ENCODE measurements at regions of chr15 and their contacts with region 1.

Region 1: DNA sequence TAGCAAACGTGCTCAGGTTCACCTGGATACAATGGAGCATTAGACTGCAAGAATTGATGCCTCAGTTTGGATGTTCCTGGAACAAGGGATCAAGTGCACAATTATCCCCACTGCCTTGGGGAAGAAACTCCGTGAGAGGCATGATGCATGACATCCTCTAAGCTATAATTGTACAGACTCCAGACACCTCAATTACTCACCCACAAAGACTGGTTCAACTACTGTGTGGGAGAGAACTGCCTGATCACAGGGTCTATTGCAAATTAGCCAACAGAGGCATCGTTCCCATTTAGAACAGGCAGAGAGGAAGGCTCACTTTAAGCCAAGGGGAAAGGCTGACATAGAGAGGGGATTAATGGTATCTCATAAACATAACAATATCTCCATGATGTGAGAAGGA is 43.5 kb downstream of the ARRDC4 start:
- DNase-seq: peak; percentile 86
- H3K4me3 ChIP-seq: no peak overlapping the region
- H3K27ac ChIP-seq: peak overlapping the region; percentile 92
- H3K4me1 ChIP-seq: peaks cover 48% of the 10 kb centered on the region
- H3K27me3 ChIP-seq: no peaks in the 10 kb centered on the region
- CTCF ChIP-seq: no peak

Region 2: GRCh38 chr15:98025235-98025634 is 21.2 kb after region 1 on chr15:
- CTCF ChIA-PET with region 1: no interaction called
- dilution Hi-C with region 1: no loop called
- in situ Hi-C with region 1: no loop called
- intact Hi-C with region 1: loop called (anchors 1 kb)
- DNase-seq: peak; percentile 81
- H3K4me3 ChIP-seq: no peak overlapping the region
- H3K27ac ChIP-seq: peak overlapping the region; percentile 40
- H3K4me1 ChIP-seq: peaks cover 12% of the 10 kb centered on the region
- H3K27me3 ChIP-seq: no peaks in the 10 kb centered on the region
- CTCF ChIP-seq: no peak

Region 3: GRCh38 chr15:98035577-98036010 is 31.6 kb after region 1 on chr15:
- CTCF ChIA-PET with region 1: no interaction called
- dilution Hi-C with region 1: no loop called
- in situ Hi-C with region 1: no loop called
- intact Hi-C with region 1: loop called (anchors 2 kb)
- DNase-seq: peak; percentile 83
- H3K4me3 ChIP-seq: peak overlapping the region in 2 of 3 experiments; percentile 20 to 29
- H3K27ac ChIP-seq: peak overlapping the region; percentile 94
- H3K4me1 ChIP-seq: peaks cover 21% of the 10 kb centered on the region
- H3K27me3 ChIP-seq: no peaks in the 10 kb centered on the region
- CTCF ChIP-seq: no peak

Region 4: DNA sequence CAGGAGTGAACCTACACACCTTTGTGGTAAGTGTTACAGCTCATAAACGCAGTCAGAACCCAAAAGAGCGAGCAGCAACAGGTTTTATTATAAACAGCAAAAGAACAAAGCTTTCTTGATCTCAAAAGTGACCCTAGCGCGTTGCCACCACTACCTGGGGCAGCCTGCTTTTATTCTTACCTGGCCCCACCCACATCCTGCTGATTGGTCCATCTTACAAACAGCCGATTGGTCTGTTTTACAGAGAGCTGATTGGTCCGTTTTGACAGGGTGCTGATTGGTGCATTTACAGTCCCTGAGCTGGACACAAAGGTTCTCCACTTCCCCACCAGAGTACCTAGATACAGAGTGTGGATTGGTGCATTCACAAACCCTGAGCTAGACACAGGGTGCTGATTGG is 99.6 kb after region 1 on chr15:
- CTCF ChIA-PET with region 1: no interaction called
- dilution Hi-C with region 1: no loop called
- in situ Hi-C with region 1: no loop called
- intact Hi-C with region 1: no loop called
- DNase-seq: no peak
- H3K4me3 ChIP-seq: no peak overlapping the region
- H3K27ac ChIP-seq: no peak overlapping the region
- H3K4me1 ChIP-seq: no peaks in the 10 kb centered on the region
- H3K27me3 ChIP-seq: no peaks in the 10 kb centered on the region
- CTCF ChIP-seq: no peak